ENCODE measurements at regions of chr4 and their contacts with region 1.

Region 1: GRCh38 chr4:42519803-42520417 is 122.6 kb downstream of the SHISA3 start:
- DNase-seq: peak; percentile 57 to 84
- H3K4me3 ChIP-seq: no peak overlapping the region
- H3K27ac ChIP-seq: no peak overlapping the region
- H3K4me1 ChIP-seq: peaks cover 0 to 7% (median 0%) of the 10 kb centered on the region in 4 donors
- H3K27me3 ChIP-seq: no peaks in the 10 kb centered on the region
- CTCF ChIP-seq: peak in 4 of 7 experiments; percentile 34 to 72 (median 52)
- EP300 ChIP-seq: no peak
- POLR2A ChIP-seq: no peak

Region 2: DNA sequence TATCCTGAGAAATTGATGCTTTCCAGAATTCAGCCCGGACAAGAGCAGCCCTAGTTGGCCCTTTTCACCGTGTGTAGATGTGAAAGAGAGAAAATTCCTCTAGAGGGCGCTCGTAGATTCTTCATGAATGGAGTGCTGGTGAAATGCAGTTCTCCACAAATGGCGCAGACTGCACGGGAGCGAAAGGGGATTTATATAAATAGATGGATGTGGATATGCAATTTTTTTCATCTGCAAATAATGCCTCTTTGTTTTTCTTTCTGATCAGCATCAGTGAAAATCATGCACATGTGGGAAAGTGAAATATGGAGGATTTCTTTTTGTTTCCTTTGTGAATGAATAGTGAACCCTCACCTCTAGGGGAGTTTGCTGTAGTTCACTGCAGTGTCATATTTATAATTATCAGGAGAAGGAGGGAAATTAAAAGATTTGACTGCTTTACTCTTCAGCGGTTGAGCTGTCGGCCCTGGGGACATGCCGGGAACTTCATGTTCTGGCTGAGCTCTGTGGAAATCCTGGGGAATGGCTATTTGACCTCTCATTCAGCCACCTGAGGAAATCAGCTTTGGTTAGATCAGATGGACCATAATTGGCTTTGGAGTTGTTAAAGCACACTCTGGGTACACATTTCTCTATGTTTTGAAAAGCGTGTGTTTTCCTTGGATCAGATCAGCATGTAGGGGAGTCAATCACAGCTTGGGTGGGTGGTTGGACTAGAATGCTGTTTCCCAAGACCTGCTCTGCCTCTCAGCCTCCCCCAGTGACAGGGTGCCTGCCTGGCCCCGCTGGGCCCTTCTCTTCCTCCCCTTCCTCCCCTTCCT is 237.6 kb before region 1 on chr4:
- intact Hi-C with region 1: loop called (anchors 5 kb)
- DNase-seq: peak; percentile 30 to 92
- H3K4me3 ChIP-seq: no peak overlapping the region
- H3K27ac ChIP-seq: no peak overlapping the region
- H3K4me1 ChIP-seq: peaks cover 0 to 9% (median 0%) of the 10 kb centered on the region in 4 donors
- H3K27me3 ChIP-seq: no peaks in the 10 kb centered on the region
- CTCF ChIP-seq: peak in 5 of 7 experiments; percentile 31 to 63 (median 56)
- EP300 ChIP-seq: no peak
- POLR2A ChIP-seq: no peak

Region 3: GRCh38 chr4:42371306-42372252 is 148.3 kb before region 1 on chr4:
- intact Hi-C with region 1: loop called (anchors 5 kb)
- DNase-seq: peak in 1 of 2 donors; percentile 79
- H3K4me3 ChIP-seq: no peak overlapping the region
- H3K27ac ChIP-seq: no peak overlapping the region
- H3K4me1 ChIP-seq: no peaks in the 10 kb centered on the region
- H3K27me3 ChIP-seq: peaks cover 0 to 7% (median 0%) of the 10 kb centered on the region in 3 donors
- CTCF ChIP-seq: peak in 4 of 7 experiments; percentile 21 to 49 (median 36)
- EP300 ChIP-seq: no peak
- POLR2A ChIP-seq: no peak

Measured in stomach (tissue), 19 donors.